ENCODE measurements at regions of chr4 and their contacts with region 1.

Region 1: GRCh38 chr4:139603576-139604387 is 47.8 kb upstream of the SETD7 start:
- DNase-seq: peak; percentile 49
- ATAC-seq: peak; percentile 73
- H3K4me3 ChIP-seq: no peak overlapping the region
- H3K27ac ChIP-seq: no peak overlapping the region
- H3K4me1 ChIP-seq: peaks cover 6 to 18% of the 10 kb centered on the region in 2 experiments; a peak in 3 of 4 replicates
- H3K27me3 ChIP-seq: no peaks in the 10 kb centered on the region
- CTCF ChIP-seq: peak; percentile 67 to 76 (median 69); a peak in 5 of 6 replicates
- POLR2A ChIP-seq: no peak
- RAD21 ChIP-seq: peak; percentile 83

Region 2: DNA sequence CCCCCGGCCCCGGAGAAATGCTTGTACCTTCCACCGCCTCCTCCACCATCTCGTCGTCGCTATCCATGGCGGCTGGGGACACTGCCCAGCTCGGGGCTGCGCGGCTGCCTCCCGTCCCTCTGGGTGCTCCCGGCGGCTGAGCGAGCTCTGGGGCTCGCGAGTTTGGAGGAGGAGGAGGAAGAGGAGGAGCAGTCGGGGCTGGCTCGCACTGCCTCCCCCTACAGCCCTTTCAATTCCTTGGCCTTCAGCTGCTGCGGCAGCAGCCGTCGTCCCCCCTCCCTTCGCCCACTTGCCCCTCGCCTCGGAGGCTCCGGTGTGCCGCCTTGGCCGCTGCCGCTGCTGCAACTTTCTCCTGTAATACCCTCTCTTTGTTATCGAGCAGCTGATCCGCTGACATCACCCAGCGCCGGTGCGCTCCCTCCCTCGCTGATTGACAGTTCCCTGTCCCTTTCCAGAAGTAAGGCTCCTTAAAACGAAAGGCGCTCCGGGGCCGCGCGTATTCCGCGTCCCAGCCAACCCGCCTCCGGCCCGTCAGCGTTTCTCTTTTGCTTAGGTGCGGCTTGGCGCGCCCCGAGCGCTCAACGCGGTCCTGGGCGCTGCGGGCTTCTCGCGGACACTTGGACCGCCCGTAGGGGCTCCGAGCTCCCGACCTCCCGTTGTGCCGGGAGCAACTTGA is 47.6 kb before region 1 on chr4 and contains the start of gene SETD7:
- CTCF ChIA-PET with region 1: no interaction called
- POLR2A ChIA-PET with region 1: no interaction called
- RAD21 ChIA-PET with region 1: no interaction called
- intact Hi-C with region 1: no loop called
- DNase-seq: peak; percentile 57
- ATAC-seq: peak; percentile 71
- H3K4me3 ChIP-seq: peak within 1 kb of the TSS; percentile 72 to 75
- H3K27ac ChIP-seq: peak within 1 kb of the TSS; percentile 85
- H3K4me1 ChIP-seq: peaks cover 12 to 34% of the 10 kb centered on the region in 2 experiments; a peak in 3 of 4 replicates
- H3K27me3 ChIP-seq: no peaks in the 10 kb centered on the region; the same call in 1 of the 2 replicates
- CTCF ChIP-seq: no peak
- POLR2A ChIP-seq: peak; percentile 50
- RAD21 ChIP-seq: no peak
- total RNA-seq, gene SETD7: 41.6 TPM

Region 3: DNA sequence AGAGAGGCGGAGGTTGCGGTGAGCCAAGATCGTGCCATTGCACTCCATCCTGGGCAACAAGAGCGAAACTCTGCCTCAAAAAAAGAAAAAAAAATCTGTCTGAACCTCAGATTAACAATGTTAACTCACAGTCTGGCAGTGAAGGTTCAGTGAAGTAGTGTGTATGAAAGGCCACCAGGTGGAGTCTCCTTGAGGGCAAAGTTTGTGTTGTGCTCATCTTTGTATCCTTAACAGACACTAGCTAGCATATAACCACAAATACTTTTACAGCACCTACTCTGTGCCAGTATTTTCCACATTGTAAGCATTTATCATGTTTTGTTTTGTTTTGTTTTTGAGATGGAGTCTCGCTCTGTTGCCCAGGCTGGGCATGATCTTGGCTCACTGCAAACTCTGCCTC is 15.9 kb after region 1 on chr4:
- CTCF ChIA-PET with region 1: interaction called, 12 read pairs
- POLR2A ChIA-PET with region 1: no interaction called
- RAD21 ChIA-PET with region 1: no interaction called
- intact Hi-C with region 1: no loop called
- DNase-seq: no peak
- ATAC-seq: peak; percentile 82
- H3K4me3 ChIP-seq: no peak overlapping the region
- H3K27ac ChIP-seq: no peak overlapping the region
- H3K4me1 ChIP-seq: no peaks in the 10 kb centered on the region
- H3K27me3 ChIP-seq: no peaks in the 10 kb centered on the region
- CTCF ChIP-seq: peak; percentile 49 to 72 (median 65); a peak in 5 of 6 replicates
- POLR2A ChIP-seq: no peak
- RAD21 ChIP-seq: peak; percentile 44

Region 4: GRCh38 chr4:139633661-139634060 is 29.9 kb after region 1 on chr4:
- CTCF ChIA-PET with region 1: interaction called, 16 read pairs
- POLR2A ChIA-PET with region 1: no interaction called
- RAD21 ChIA-PET with region 1: no interaction called
- intact Hi-C with region 1: no loop called
- DNase-seq: no peak
- ATAC-seq: peak; percentile 87
- H3K4me3 ChIP-seq: no peak overlapping the region
- H3K27ac ChIP-seq: no peak overlapping the region
- H3K4me1 ChIP-seq: no peaks in the 10 kb centered on the region
- H3K27me3 ChIP-seq: no peaks in the 10 kb centered on the region
- CTCF ChIP-seq: peak; percentile 34 to 49 (median 44); a peak in 4 of 6 replicates
- POLR2A ChIP-seq: no peak
- RAD21 ChIP-seq: peak; percentile 70